Ovary (tissue), 10 donors: ENCODE measurements at regions of chr11 and their contacts with region 1.

Region 1: DNA sequence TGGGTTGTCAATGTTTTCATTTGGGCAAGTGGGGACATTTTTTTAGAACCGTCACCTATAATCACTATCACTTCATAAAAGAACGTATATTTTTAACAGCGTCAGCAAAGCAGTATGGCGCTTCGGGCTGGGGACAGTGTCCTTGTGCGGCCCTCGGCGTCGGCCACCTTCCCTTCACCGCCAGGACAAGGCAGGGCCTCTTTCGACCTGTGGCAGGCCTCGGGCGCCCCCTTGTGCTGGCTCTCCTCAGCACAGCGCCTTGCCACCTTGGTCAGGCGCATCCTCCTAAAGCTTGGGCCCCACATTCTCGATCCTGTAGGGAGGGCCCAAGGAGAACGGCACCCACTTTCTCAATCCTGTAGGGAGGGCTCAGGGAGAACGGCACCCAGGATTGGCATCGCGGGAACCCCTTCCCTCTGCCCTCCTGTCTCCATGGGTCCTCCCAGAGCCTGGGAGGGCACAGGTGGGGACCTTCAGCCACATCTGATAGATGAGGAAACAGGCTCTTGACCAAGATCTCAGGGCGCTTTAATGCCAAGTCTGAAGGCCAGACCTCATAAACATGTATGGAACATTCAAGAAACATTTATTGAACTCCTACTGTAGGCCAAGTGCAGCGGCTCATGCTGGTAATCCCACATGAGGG is 11.5 kb upstream of the FADD start:
- DNase-seq: peak in 4 of 5 donors; percentile 49 to 75 (median 65)
- H3K4me3 ChIP-seq: no peak overlapping the region
- H3K27ac ChIP-seq: no peak overlapping the region
- H3K4me1 ChIP-seq: no peaks in the 10 kb centered on the region
- H3K27me3 ChIP-seq: no peaks in the 10 kb centered on the region
- CTCF ChIP-seq: peak in 2 of 3 donors; percentile 37 to 60
- EP300 ChIP-seq: no peak
- POLR2A ChIP-seq: no peak

Region 2: DNA sequence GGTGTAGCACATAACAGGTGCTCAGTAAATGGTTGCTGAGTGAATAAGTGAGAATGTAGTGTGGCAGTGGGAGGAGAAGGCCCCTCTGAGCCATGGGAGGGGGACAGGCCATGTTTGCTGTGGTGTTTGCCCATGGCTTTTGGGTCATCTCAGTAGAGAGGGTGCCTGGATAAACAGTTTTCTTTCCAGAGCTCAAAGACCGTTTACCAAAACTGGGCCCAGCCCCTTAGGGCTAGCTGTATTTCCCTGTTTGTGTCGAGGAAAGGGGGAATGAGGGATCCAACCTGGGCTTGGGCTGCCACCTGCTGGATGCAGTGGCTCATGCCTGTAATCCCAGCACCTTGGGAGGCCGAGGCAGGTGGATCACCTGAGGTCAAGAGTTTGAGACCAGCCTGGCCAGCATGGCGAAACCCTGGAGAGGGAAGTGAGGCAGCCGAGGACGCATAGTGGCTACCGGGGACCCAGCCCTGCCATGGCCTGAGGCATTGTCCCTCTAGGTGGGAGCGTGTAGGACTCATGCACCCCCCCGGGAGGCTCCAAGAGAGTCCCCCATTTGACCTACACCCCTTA is 507.8 kb before region 1 on chr11:
- intact Hi-C with region 1: loop called (anchors 5 to 10 kb)
- DNase-seq: no peak
- H3K4me3 ChIP-seq: no peak overlapping the region
- H3K27ac ChIP-seq: no peak overlapping the region
- H3K4me1 ChIP-seq: peaks cover 1% of the 10 kb centered on the region
- H3K27me3 ChIP-seq: no peaks in the 10 kb centered on the region
- CTCF ChIP-seq: no peak
- EP300 ChIP-seq: no peak
- POLR2A ChIP-seq: no peak

Region 3: GRCh38 chr11:69801519-69802335 is 389.9 kb before region 1 on chr11:
- intact Hi-C with region 1: no loop called
- DNase-seq: no peak
- H3K4me3 ChIP-seq: no peak overlapping the region
- H3K27ac ChIP-seq: no peak overlapping the region
- H3K4me1 ChIP-seq: no peaks in the 10 kb centered on the region
- H3K27me3 ChIP-seq: no peaks in the 10 kb centered on the region
- CTCF ChIP-seq: no peak
- EP300 ChIP-seq: no peak
- POLR2A ChIP-seq: no peak

Region 4: GRCh38 chr11:69909561-69910496 is 281.8 kb before region 1 on chr11:
- intact Hi-C with region 1: loop called in 3 of 4 experiments (anchors 2 to 5 kb)
- DNase-seq: peak in 1 of 5 donors; percentile 35
- H3K4me3 ChIP-seq: no peak overlapping the region
- H3K27ac ChIP-seq: no peak overlapping the region
- H3K4me1 ChIP-seq: no peaks in the 10 kb centered on the region
- H3K27me3 ChIP-seq: no peaks in the 10 kb centered on the region
- CTCF ChIP-seq: peak in 1 of 3 donors; percentile 10
- EP300 ChIP-seq: no peak
- POLR2A ChIP-seq: no peak

Region 5: DNA sequence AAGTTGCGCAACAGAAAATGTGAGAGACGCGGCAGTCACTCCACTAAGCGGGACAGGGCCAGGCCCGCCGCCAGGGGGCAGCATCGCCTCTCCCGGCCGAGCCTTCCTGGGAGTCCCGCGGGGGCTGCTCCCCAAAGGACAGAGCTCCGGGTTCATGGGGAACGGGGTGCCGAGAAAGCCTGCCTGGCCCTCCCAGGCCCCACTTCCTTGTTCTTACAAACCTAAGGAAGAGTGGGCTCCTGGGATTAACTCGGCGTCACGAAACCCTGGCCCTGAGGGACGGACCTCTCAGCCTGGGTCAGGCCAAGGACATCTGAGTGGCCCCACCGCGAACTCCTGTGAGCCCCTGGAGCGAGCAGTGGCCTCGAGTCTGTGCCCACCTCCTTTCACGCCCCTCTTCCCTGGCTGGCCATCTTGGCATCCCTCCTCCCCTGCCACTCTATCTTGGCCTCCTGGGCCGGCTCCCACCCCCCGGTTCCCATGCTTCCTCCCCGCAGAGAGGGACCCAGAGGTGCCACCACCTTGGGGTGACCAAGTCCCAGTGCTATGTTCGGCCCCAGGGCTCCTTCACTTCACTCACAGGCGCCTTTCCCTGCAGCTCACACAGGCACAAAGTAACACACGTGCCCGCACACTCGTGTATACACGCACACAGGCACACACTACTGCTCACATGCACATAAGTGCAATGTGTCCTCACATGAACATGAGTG is 272.5 kb before region 1 on chr11:
- intact Hi-C with region 1: loop called in 3 of 4 experiments (anchors 2 to 5 kb)
- DNase-seq: peak; percentile 78 to 90 (median 86)
- H3K4me3 ChIP-seq: no peak overlapping the region
- H3K27ac ChIP-seq: no peak overlapping the region
- H3K4me1 ChIP-seq: peaks cover 12% of the 10 kb centered on the region
- H3K27me3 ChIP-seq: no peaks in the 10 kb centered on the region
- CTCF ChIP-seq: peak; percentile 88 to 100 (median 91)
- EP300 ChIP-seq: no peak
- POLR2A ChIP-seq: no peak

Region 6: DNA sequence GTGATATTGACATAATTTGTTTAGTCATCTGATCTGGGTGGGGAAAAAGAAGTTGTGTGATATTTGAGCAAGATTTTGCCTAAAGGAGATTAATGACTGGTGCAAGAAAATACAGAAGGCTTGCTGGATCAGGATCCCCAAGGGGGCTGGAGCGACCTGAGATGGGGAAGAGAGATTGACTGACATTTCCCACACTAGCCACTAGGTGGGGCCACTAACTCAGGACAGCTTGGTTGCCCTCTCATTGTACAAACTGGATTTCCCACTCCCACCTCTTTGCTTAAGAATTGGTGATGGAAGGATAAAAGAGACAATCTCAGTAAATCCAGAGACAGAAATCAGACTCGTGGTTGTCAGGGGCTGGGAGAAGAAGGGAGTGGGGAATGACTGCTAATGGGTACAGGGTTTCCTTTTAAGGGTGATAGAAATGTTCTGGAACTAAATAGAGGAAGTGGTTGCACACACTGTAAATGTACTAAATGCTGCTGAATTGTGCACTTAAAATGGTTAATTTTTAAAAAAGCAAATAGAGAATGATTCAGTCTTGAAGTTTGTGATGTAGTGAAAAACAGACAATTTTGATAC is 257.5 kb after region 1 on chr11:
- intact Hi-C with region 1: no loop called
- DNase-seq: no peak
- H3K4me3 ChIP-seq: no peak overlapping the region
- H3K27ac ChIP-seq: no peak overlapping the region
- H3K4me1 ChIP-seq: no peaks in the 10 kb centered on the region
- H3K27me3 ChIP-seq: no peaks in the 10 kb centered on the region
- CTCF ChIP-seq: no peak
- EP300 ChIP-seq: no peak
- POLR2A ChIP-seq: no peak